ENCODE measurements at regions of chr1 and their contacts with region 1.

Region 1: GRCh38 chr1:201530741-201531531 is 8.0 kb upstream of the NAV1 start:
- DNase-seq: peak; percentile 97
- H3K4me3 ChIP-seq: no peak overlapping the region
- H3K27ac ChIP-seq: peak overlapping the region; percentile 30 to 53 (median 45)
- H3K4me1 ChIP-seq: peaks cover 23 to 47% (median 46%) of the 10 kb centered on the region in 4 donors
- H3K27me3 ChIP-seq: no peaks in the 10 kb centered on the region
- CTCF ChIP-seq: peak; percentile 84 to 93 (median 89)
- EP300 ChIP-seq: no peak
- POLR2A ChIP-seq: no peak

Region 2: GRCh38 chr1:200767321-200767720 is 763.6 kb before region 1 on chr1:
- intact Hi-C with region 1: no loop called
- DNase-seq: no peak
- H3K4me3 ChIP-seq: no peak overlapping the region
- H3K27ac ChIP-seq: no peak overlapping the region
- H3K4me1 ChIP-seq: peaks cover 0 to 12% (median 4%) of the 10 kb centered on the region in 4 donors
- H3K27me3 ChIP-seq: no peaks in the 10 kb centered on the region
- CTCF ChIP-seq: no peak
- EP300 ChIP-seq: no peak
- POLR2A ChIP-seq: no peak

Region 3: DNA sequence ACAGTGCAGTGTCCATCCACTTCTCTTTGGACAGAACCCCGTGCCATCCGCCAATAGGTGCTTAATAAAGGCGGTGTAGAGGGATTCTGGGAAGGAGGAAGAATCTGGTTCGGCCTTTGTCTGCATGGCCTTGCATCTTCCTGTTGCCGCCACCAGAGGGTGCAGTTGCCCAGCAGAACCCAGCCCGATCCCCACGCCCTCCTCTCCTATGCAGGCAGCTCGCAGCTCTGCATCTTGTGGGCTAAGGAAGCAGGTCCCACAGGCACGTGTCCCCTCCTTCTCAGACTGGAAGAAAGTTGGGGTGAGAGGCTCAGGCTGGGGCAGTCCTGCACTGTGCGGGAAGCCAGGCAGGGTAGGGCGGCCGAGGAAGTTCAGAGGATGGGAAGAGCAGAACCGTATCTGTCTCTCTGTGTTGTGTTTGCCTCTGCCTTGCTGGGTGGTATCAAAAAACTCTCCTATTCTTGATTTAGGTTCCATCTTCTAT is 28.8 kb after region 1 on chr1:
- intact Hi-C with region 1: loop called (anchors 5 kb)
- DNase-seq: no peak
- H3K4me3 ChIP-seq: no peak overlapping the region
- H3K27ac ChIP-seq: no peak overlapping the region
- H3K4me1 ChIP-seq: peaks cover 60 to 70% (median 67%) of the 10 kb centered on the region in 4 donors
- H3K27me3 ChIP-seq: no peaks in the 10 kb centered on the region
- CTCF ChIP-seq: peak; percentile 95 to 98 (median 97)
- EP300 ChIP-seq: no peak
- POLR2A ChIP-seq: no peak

Region 4: GRCh38 chr1:201703621-201704439 is 172.9 kb after region 1 on chr1:
- intact Hi-C with region 1: loop called (anchors 2 kb)
- DNase-seq: no peak
- H3K4me3 ChIP-seq: no peak overlapping the region
- H3K27ac ChIP-seq: peak overlapping the region; percentile 57 to 76 (median 68)
- H3K4me1 ChIP-seq: peaks cover 29 to 41% (median 38%) of the 10 kb centered on the region in 4 donors
- H3K27me3 ChIP-seq: no peaks in the 10 kb centered on the region
- CTCF ChIP-seq: peak; percentile 96 to 97 (median 96)
- EP300 ChIP-seq: no peak
- POLR2A ChIP-seq: no peak

Region 5: DNA sequence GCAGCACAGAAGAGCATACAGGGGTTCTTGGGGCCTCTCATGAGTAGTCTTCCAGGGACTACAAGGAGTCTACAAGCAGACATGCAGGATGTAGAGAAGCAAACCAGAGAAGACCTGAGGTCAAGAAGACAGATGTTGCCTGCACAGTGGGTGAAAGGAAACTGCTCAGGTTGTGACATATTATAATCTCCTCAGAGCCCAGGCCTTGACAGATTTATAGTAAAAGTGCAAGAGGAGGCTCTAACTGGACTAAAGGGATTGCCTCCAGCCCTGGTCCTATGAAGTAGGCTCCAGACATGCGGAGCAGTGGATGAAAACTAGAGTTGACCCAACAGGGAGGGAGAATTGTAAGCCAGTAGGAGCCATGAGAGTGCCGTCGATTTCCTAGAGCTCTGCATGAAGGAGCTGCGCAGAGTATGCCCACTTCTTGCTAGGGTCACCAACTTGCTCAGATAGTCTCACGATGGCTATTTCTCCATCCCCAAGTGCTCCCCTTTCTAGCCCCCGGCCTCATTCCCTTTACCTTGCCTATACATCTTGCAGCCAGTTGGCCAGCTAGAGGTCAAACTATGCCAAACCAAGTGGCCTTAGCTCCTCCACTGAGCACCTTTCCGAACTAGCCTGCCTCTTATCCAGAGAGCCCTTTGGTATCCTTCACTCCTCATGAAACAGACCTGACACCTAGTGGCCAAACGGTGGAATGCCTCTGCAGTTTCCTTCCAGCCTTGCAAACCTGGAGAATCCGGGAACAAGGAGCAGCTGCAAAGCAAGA is 261.8 kb after region 1 on chr1:
- intact Hi-C with region 1: loop called (anchors 5 kb)
- DNase-seq: peak; percentile 96
- H3K4me3 ChIP-seq: no peak overlapping the region
- H3K27ac ChIP-seq: peak overlapping the region; percentile 52 to 75 (median 69)
- H3K4me1 ChIP-seq: peaks cover 44 to 47% (median 45%) of the 10 kb centered on the region in 4 donors
- H3K27me3 ChIP-seq: no peaks in the 10 kb centered on the region
- CTCF ChIP-seq: peak; percentile 96 to 98 (median 97)
- EP300 ChIP-seq: no peak
- POLR2A ChIP-seq: no peak

Region 6: GRCh38 chr1:202540014-202540413 is 1009.1 kb after region 1 on chr1:
- intact Hi-C with region 1: no loop called
- DNase-seq: no peak
- H3K4me3 ChIP-seq: peak overlapping the region; percentile 55 to 70 (median 64)
- H3K27ac ChIP-seq: peak overlapping the region; percentile 89 to 92 (median 90)
- H3K4me1 ChIP-seq: peaks cover 20 to 28% (median 26%) of the 10 kb centered on the region in 4 donors
- H3K27me3 ChIP-seq: no peaks in the 10 kb centered on the region
- CTCF ChIP-seq: no peak
- EP300 ChIP-seq: no peak
- POLR2A ChIP-seq: no peak

Measured in esophagus muscularis mucosa (tissue), 4 donors.